ENCODE measurements at regions of chr20 and their contacts with region 1.

Region 1: GRCh38 chr20:59177261-59178250 is 13.9 kb downstream of the ZNF831 start:
- DNase-seq: peak; percentile 69
- ATAC-seq: peak; percentile 88
- H3K4me3 Mint-ChIP-seq: peak overlapping the region; percentile 55
- H3K27ac Mint-ChIP-seq: peak overlapping the region; percentile 85
- H3K4me1 Mint-ChIP-seq: peaks cover 84% of the 10 kb centered on the region
- H3K27me3 Mint-ChIP-seq: no peaks in the 10 kb centered on the region

Region 2: DNA sequence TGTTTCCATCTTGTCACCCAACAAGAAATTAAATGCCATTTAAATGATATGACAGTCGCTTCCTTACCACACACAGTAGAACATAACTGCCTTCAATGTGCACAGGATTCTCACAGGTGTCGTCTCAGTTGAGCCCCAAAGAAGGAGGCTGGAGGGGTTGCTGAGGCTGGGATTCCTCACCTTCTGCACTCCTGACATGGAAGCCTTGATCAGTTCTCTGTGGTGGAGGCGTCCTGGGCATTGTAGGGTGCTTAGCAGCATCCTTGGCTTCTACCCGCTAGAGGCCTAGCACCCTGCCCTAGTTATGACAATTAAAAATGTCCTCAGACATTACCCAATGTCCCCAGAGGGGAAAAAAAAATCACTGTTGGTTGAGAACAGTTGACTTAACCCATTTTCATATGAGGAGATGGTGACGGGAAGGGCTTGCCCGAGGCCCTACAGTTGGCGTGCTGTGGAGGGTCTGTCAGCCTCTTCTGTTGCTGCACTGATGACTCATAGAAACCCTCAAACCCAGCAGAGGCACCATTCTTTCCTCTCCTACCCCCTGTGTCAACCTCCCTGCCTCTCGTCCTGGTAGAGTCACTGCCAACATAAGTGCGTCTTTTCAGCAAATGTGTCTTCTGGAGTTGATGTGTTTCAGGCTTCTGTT is 33.3 kb before region 1 on chr20:
- CTCF ChIA-PET with region 1: interaction called, 4 read pairs
- POLR2A ChIA-PET with region 1: no interaction called
- intact Hi-C with region 1: loop called in 1 of 2 experiments (anchors 1 kb)
- DNase-seq: peak; percentile 75
- ATAC-seq: peak; percentile 79
- H3K4me3 Mint-ChIP-seq: peak overlapping the region; percentile 36
- H3K27ac Mint-ChIP-seq: peak overlapping the region; percentile 99
- H3K4me1 Mint-ChIP-seq: peaks cover 56% of the 10 kb centered on the region
- H3K27me3 Mint-ChIP-seq: no peaks in the 10 kb centered on the region

Region 3: DNA sequence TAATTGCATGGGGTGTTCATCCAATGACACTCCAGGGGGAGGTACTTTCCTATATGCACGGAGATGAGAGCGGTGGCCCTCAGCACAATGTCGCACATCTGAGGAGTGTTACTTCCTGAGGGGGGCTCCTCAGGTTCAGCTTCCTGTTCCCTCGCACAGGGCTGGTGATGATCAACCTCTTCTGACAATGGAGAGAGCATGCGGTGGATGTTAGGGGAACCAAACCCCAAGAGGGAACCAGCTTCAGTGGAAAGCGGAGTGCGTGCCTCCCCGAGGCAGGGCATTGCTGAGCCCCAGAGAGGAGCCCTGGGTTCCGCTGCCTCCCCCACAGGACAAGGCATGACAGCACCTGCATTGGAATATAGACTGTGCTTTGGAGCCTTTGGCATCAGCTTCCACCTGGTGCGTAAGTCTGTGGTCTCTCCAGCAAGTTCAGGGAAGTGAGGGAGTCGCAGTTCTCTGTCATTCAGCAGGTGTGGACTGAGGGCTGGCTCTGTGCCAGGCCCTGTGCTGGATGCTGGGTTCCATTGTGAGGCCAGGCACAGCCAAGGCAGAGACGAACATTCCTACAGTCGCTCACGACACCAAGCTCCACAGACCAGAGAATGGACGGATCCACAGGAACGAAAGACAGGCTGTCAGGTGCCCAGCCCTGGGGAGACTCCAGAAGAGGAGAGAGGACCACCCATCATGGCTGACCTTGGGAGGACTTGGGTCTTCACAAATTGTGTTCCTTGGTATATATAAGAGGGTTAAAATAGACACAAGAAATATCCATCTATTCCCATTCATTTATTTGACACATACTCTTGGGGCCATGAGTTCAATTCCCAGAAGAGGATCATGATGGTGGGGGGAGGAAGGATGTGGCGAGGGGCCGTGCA is 17.8 kb before region 1 on chr20:
- CTCF ChIA-PET with region 1: interaction called, 8 read pairs
- POLR2A ChIA-PET with region 1: interaction called, 5 read pairs
- intact Hi-C with region 1: loop called in 1 of 2 experiments (anchors 2 kb)
- DNase-seq: peak; percentile 75
- ATAC-seq: peak; percentile 83
- H3K4me3 Mint-ChIP-seq: peak overlapping the region; percentile 80
- H3K27ac Mint-ChIP-seq: peak overlapping the region; percentile 97
- H3K4me1 Mint-ChIP-seq: peaks cover 82% of the 10 kb centered on the region
- H3K27me3 Mint-ChIP-seq: no peaks in the 10 kb centered on the region

Region 4: GRCh38 chr20:60009826-60010616 is 832.5 kb after region 1 on chr20:
- CTCF ChIA-PET with region 1: no interaction called
- POLR2A ChIA-PET with region 1: no interaction called
- intact Hi-C with region 1: no loop called
- DNase-seq: no peak
- ATAC-seq: no peak
- H3K4me3 Mint-ChIP-seq: no peak overlapping the region
- H3K27ac Mint-ChIP-seq: no peak overlapping the region
- H3K4me1 Mint-ChIP-seq: peaks cover 17% of the 10 kb centered on the region
- H3K27me3 Mint-ChIP-seq: no peaks in the 10 kb centered on the region

Measured in activated CD4-positive, alpha-beta T cell treated with anti-CD3 and anti-CD28 coated beads for 36 hours (primary cell).